OCI-LY7 (cell line): ENCODE measurements at regions of chr7 and their contacts with region 1.

Region 1: DNA sequence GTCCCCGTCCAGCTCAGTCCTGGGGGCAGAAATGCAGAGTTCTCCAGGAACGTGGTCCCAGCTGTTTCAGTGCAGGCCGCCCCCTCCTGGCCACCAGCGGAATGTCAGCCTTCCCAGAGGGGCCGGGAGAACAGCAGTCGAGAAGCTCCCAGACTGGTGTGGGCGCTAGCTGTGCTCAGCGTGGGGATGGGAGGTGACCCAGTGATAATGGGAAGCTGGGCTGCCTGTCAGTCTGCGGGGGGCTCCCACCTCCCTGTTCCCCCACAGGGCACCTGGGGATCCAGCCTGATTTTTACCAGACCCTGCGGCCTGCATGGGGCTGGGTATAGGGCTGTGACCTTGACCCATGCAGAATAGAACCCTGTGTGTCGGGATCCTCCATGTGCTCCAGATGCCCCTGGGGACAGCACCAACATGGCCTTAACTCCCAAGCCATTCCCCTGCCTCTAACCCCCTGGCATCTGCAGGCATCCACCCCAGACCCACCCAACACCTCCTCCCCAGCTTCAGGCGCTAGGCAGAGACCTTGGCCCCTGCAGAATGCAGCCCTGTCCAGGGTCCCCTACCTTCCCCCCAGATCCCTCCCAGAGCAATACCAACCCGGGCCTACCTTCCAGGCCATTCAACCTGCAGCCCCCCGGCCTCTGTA is 946 bp upstream of the ELN start:
- DNase-seq: peak; percentile 53
- H3K4me3 ChIP-seq: no peak overlapping the region
- H3K27ac ChIP-seq: no peak overlapping the region
- H3K4me1 ChIP-seq: no peaks in the 10 kb centered on the region
- CTCF ChIP-seq: peak; percentile 93

Region 2: GRCh38 chr7:73738612-73739374 is 288.2 kb before region 1 on chr7 and contains the start of gene ABHD11:
- CTCF ChIA-PET with region 1: no interaction called
- POLR2A ChIA-PET with region 1: no interaction called
- intact Hi-C with region 1: no loop called
- DNase-seq: peak; percentile 93
- H3K4me3 ChIP-seq: peak within 1 kb of the TSS; percentile 91
- H3K27ac ChIP-seq: peak within 1 kb of the TSS; percentile 78
- H3K4me1 ChIP-seq: peaks cover 49% of the 10 kb centered on the region
- CTCF ChIP-seq: peak; percentile 41; the same call in 1 of the 2 replicates
- total RNA-seq, gene ABHD11: 25.8 and 27.4 TPM in 2 replicates

Region 3: GRCh38 chr7:73865738-73866445 is 161.1 kb before region 1 on chr7:
- CTCF ChIA-PET with region 1: interaction called, 3 read pairs
- POLR2A ChIA-PET with region 1: no interaction called
- intact Hi-C with region 1: loop called (anchors 1 kb)
- DNase-seq: peak; percentile 44
- H3K4me3 ChIP-seq: no peak overlapping the region
- H3K27ac ChIP-seq: no peak overlapping the region
- H3K4me1 ChIP-seq: no peaks in the 10 kb centered on the region
- CTCF ChIP-seq: peak; percentile 75

Region 4: GRCh38 chr7:74043523-74043951 is 16.5 kb after region 1 on chr7:
- CTCF ChIA-PET with region 1: no interaction called
- POLR2A ChIA-PET with region 1: no interaction called
- intact Hi-C with region 1: no loop called
- DNase-seq: no peak
- H3K4me3 ChIP-seq: no peak overlapping the region
- H3K27ac ChIP-seq: no peak overlapping the region
- H3K4me1 ChIP-seq: no peaks in the 10 kb centered on the region
- CTCF ChIP-seq: no peak

Region 5: DNA sequence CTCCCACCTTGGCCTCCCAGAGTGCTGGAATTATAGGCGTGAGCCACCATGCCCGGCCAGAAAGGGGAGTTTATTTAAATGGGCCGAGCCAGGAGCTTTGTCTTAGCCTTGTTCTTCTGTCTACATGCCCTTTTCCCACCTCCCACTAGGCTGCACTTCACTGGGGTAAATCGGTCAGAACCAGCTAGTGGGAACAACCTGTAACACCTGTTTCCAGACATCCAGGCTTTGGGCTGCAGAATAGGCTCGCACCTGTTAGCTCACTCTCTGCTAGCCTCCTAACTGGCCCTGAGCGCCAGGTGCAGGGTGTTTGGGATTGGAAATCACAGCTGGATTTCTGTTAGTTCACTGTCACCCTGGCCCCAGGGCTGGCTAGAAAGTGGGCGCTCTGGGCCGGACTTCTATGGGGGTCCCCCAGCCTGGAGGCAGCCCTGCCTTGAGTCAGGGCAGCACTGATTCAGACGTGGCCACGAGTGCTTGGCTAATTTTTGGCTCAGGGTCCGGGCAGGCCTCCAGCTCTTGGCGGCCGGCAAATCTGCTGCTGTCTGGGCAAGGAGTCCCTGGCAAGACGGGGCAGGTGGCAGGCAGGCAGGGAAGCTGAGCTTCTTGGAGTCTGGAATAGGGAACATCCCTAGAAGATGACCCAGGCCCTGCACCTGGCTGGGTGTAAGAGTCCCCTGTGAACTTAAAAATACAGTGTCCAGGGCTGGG is 475.3 kb after region 1 on chr7:
- CTCF ChIA-PET with region 1: no interaction called
- POLR2A ChIA-PET with region 1: no interaction called
- intact Hi-C with region 1: no loop called
- DNase-seq: no peak
- H3K4me3 ChIP-seq: no peak overlapping the region
- H3K27ac ChIP-seq: no peak overlapping the region
- H3K4me1 ChIP-seq: peaks cover 13% of the 10 kb centered on the region
- CTCF ChIP-seq: no peak